Activated naive CD4-positive, alpha-beta T cell treated with anti-CD3 and anti-CD28 coated beads for 36 hours (primary cell): ENCODE measurements at regions of chr2 and their contacts with region 1.

Region 1: GRCh38 chr2:160109936-160110673 is 47.7 kb upstream of the PLA2R1 start:
- DNase-seq: peak; percentile 74
- H3K4me3 Mint-ChIP-seq: no peak overlapping the region
- H3K27ac Mint-ChIP-seq: no peak overlapping the region
- H3K4me1 Mint-ChIP-seq: no peaks in the 10 kb centered on the region
- H3K27me3 Mint-ChIP-seq: peaks cover 10% of the 10 kb centered on the region

Region 2: DNA sequence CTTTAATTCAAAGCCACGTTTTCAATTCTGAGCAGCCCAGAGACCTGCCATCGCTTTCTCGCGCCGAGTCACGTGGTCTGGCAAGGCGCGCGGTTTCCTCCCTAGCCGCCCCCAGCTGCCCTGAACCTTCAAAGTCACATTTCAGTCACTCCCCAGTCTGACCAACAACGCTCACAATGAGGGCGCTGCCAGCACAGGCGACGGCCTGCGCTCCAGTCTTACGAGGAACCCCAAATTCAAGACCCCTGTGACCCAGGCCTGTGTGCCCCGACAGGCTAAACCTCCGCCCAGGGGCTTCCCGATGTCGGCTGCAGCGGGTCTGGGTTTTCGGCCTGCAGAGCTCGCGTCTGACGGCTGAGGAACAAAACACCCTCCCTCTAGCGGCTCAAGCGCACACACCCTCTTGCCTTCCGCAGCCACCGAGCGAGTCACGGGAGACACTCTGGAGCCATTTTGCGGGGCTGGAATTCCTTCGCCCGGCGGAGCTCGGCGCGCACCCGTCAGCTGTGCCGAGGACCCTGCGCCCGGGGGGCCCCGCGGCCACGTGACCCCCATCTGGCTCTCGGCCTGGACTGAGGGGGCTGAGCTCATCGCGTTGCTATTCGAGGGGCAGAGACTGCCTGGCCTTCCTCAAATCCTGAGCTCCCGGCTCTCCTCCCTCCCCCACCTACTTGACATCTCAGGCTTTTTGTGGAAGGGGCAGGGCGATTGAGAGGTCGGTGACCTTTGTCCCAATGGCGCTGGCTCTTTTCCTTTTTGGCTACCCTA is 159.9 kb after region 1 on chr2:
- CTCF ChIA-PET with region 1: no interaction called
- intact Hi-C with region 1: loop called (anchors 5 kb)
- DNase-seq: peak; percentile 64
- H3K4me3 Mint-ChIP-seq: peak overlapping the region; percentile 65
- H3K27ac Mint-ChIP-seq: peak overlapping the region; percentile 53
- H3K4me1 Mint-ChIP-seq: peaks cover 39% of the 10 kb centered on the region
- H3K27me3 Mint-ChIP-seq: no peaks in the 10 kb centered on the region

Region 3: GRCh38 chr2:160429248-160430000 is 319.3 kb after region 1 on chr2:
- CTCF ChIA-PET with region 1: no interaction called
- intact Hi-C with region 1: loop called (anchors 10 kb)
- DNase-seq: no peak
- H3K4me3 Mint-ChIP-seq: peak overlapping the region; percentile 47
- H3K27ac Mint-ChIP-seq: peak overlapping the region; percentile 88
- H3K4me1 Mint-ChIP-seq: peaks cover 49% of the 10 kb centered on the region
- H3K27me3 Mint-ChIP-seq: no peaks in the 10 kb centered on the region

Region 4: GRCh38 chr2:160970052-160970965 is 860.2 kb after region 1 on chr2:
- CTCF ChIA-PET with region 1: interaction called, 5 read pairs
- intact Hi-C with region 1: loop called (anchors 1 kb)
- DNase-seq: peak; percentile 29
- H3K4me3 Mint-ChIP-seq: no peak overlapping the region
- H3K27ac Mint-ChIP-seq: no peak overlapping the region
- H3K4me1 Mint-ChIP-seq: peaks cover 8% of the 10 kb centered on the region
- H3K27me3 Mint-ChIP-seq: no peaks in the 10 kb centered on the region

Region 5: DNA sequence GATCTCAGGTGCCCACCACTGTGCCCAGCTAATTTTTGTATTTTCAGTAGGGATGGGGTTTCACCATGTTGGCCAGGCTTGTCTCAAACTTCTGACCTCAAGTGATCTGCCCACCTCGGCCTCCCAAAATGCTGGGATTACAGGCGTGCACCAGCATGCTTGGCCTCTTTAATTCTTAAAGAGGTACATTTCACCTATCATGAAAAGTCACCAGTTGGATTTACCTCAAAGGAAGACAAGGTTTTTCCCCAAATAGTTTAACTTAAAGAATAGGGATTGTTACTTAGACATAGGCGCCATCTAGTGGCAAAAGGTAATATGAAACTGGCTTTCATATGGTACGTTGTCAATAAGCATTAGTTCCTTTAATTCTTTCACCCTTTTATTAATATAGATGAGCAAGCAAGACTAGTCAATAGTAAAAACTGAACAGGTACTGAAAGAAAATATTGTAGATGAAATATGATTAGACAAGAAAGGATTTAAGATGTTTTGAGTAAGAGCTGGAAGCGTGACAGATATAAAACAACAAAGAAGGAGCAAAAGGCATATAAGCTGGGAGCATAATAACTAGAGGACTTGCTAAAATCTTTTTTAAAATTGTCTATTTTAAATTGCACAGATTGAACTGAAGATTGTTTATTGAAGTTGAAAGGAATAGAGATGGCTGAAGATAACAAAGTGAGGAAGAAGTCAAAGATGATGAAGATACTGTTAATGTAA is 1163.1 kb after region 1 on chr2:
- CTCF ChIA-PET with region 1: no interaction called
- intact Hi-C with region 1: loop called (anchors 5 kb)
- DNase-seq: peak; percentile 37
- H3K4me3 Mint-ChIP-seq: no peak overlapping the region
- H3K27ac Mint-ChIP-seq: no peak overlapping the region
- H3K4me1 Mint-ChIP-seq: peaks cover 3% of the 10 kb centered on the region
- H3K27me3 Mint-ChIP-seq: peaks cover 2% of the 10 kb centered on the region